Sigmoid colon (tissue), 7 donors: ENCODE measurements at regions of chr6 and their contacts with region 1.

Region 1: DNA sequence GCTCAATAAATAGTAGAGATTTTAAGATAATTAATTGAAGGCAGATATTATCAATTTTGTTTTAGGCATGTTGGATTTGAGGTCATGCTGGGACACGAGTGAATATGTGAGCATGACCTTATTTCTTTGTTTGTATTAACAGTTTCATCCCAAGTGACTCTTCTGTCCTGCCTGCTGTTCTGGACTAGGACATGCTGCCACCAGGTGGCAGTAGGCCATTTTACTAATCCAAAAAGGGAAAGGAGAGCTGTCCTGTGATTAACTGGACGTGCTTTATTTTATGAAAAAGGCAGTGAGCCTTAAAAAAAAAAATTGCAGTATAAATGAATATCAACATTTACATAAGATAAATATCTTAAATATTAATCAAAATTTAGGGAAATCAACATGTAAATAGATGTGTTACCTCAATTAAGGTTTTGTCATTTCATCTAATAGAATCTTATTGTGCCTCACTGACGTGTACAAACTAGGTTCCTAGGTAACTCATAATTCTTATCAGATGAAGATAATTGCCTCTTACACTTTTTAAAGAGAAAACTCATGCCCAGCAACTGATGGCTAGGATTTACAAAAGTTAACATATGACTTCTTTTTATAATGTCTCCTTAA is 49.8 kb downstream of the FRK start:
- DNase-seq: peak; percentile 70
- H3K4me3 ChIP-seq: no peak overlapping the region
- H3K27ac ChIP-seq: no peak overlapping the region
- H3K4me1 ChIP-seq: peaks cover 0 to 15% (median 6%) of the 10 kb centered on the region in 4 donors
- H3K27me3 ChIP-seq: no peaks in the 10 kb centered on the region
- CTCF ChIP-seq: peak in 3 of 4 experiments; percentile 56 to 73 (median 65)
- EP300 ChIP-seq: no peak
- POLR2A ChIP-seq: no peak

Region 2: GRCh38 chr6:115120391-115120790 is 890.5 kb before region 1 on chr6:
- intact Hi-C with region 1: no loop called
- DNase-seq: no peak
- H3K4me3 ChIP-seq: no peak overlapping the region
- H3K27ac ChIP-seq: no peak overlapping the region
- H3K4me1 ChIP-seq: no peaks in the 10 kb centered on the region
- H3K27me3 ChIP-seq: no peaks in the 10 kb centered on the region
- CTCF ChIP-seq: no peak
- EP300 ChIP-seq: no peak
- POLR2A ChIP-seq: no peak

Region 3: GRCh38 chr6:115467726-115468125 is 543.2 kb before region 1 on chr6:
- intact Hi-C with region 1: no loop called
- DNase-seq: no peak
- H3K4me3 ChIP-seq: no peak overlapping the region
- H3K27ac ChIP-seq: no peak overlapping the region
- H3K4me1 ChIP-seq: no peaks in the 10 kb centered on the region
- H3K27me3 ChIP-seq: no peaks in the 10 kb centered on the region
- CTCF ChIP-seq: no peak
- EP300 ChIP-seq: no peak
- POLR2A ChIP-seq: no peak

Region 4: GRCh38 chr6:115629415-115629814 is 381.5 kb before region 1 on chr6:
- intact Hi-C with region 1: no loop called
- DNase-seq: no peak
- H3K4me3 ChIP-seq: no peak overlapping the region
- H3K27ac ChIP-seq: no peak overlapping the region
- H3K4me1 ChIP-seq: no peaks in the 10 kb centered on the region
- H3K27me3 ChIP-seq: no peaks in the 10 kb centered on the region
- CTCF ChIP-seq: no peak
- EP300 ChIP-seq: no peak
- POLR2A ChIP-seq: no peak

Region 5: DNA sequence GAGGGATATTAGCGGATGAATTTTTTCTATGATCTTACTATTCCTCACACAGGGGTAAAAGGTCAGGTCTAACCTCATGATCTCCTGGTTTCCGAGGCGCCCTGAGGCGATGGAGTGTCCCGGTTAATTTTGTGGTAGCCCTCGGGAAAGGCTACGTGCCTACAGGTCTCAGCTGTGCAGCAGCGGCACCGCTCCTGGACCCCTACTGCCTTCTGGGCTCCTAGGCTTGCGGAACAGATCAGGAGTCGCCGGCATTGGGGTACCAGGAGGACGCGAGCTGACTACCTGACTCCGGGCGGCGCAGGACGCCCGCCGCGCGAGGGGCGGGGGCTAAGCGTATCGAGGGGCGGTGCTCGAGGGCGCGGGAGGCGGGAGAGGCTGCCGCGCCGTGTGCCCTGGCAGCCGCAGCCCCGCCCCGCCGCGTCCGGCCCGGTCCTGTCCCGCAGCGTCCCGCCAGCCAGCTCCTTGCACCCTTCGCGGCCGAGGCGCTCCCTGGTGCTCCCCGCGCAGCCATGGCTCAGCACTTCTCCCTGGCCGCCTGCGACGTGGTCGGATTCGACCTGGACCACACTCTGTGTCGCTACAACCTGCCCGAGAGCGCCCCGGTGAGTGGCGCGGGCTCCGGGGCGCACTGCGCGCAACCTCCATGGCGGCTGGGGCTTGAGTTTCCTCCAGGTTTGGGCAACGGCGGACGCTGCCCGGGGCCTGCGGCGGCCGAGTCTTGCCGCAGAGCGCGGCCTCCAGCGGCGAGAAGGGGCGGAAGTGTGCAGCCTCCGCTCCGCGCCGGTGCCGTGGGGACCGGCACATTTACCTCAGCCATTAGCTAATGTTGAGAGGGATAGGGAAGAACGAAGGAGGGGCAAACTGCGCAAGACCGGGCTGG is 89.8 kb after region 1 on chr6 and contains the start of gene NT5DC1:
- intact Hi-C with region 1: loop called (anchors 2 kb)
- DNase-seq: peak; percentile 88
- H3K4me3 ChIP-seq: peak within 1 kb of the TSS; percentile 71 to 77 (median 74)
- H3K27ac ChIP-seq: peak within 1 kb of the TSS; percentile 93 to 97 (median 94)
- H3K4me1 ChIP-seq: peaks cover 0 to 22% (median 19%) of the 10 kb centered on the region in 4 donors
- H3K27me3 ChIP-seq: no peaks in the 10 kb centered on the region
- CTCF ChIP-seq: peak in 2 of 4 experiments; percentile 18 to 24
- EP300 ChIP-seq: no peak
- POLR2A ChIP-seq: peak in 1 of 2 donors; percentile 27
- total RNA-seq, gene NT5DC1: 8.2 to 21.7 (median 8.8) TPM